ENCODE measurements at regions of chr2 and their contacts with region 1.

Region 1: DNA sequence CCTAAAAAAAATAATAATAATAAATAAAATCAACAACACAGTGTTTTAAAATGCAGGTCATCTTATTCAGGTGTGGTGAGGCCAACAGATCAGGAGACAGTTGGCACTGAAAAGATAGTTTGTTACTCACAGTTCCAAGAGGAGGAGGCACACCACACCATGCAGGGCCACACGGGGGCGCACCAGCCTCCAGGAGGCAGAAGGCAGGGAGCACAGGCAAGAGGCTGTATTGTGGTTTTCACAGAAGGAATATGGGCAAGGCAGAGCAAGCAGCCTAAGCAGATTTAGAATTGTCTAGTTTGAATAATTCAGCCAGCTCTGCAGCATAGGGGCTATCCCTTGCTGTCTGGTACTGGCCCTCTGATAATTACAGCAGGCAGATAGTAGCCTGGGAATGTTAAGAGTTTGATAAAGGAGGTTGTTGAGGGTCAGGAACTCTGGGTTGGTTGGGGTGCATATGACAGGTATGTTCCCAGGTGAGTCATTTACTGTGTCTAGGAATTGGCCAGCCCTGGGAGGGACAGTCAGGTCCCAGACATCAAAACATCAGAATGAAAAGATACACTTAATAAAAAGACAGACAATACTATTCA is 31.3 kb downstream of the KIAA2012 start:
- DNase-seq: peak; percentile 37
- H3K4me3 Mint-ChIP-seq: no peak overlapping the region
- H3K27ac Mint-ChIP-seq: no peak overlapping the region
- H3K4me1 Mint-ChIP-seq: no peaks in the 10 kb centered on the region
- H3K27me3 Mint-ChIP-seq: peaks cover 5% of the 10 kb centered on the region

Region 2: GRCh38 chr2:201854841-201855240 is 249.5 kb before region 1 on chr2:
- CTCF ChIA-PET with region 1: no interaction called
- POLR2A ChIA-PET with region 1: interaction called, 12 read pairs
- DNase-seq: no peak
- H3K4me3 Mint-ChIP-seq: no peak overlapping the region
- H3K27ac Mint-ChIP-seq: no peak overlapping the region
- H3K4me1 Mint-ChIP-seq: peaks cover 12% of the 10 kb centered on the region
- H3K27me3 Mint-ChIP-seq: peaks cover 27% of the 10 kb centered on the region

Measured in activated CD4-positive, alpha-beta T cell treated with anti-CD3 and anti-CD28 coated beads, Interleukin-2, amount 10 ng/mL, durations not matched to agents 7 days and 5 days (primary cell).